ENCODE measurements at regions of chr5 and their contacts with region 1.

Region 1: GRCh38 chr5:132419502-132420468 is 50.3 kb downstream of the SLC22A5 start:
- DNase-seq: peak; percentile 72
- ATAC-seq: peak; percentile 85
- H3K4me3 ChIP-seq: no peak overlapping the region
- H3K27ac ChIP-seq: peak overlapping the region; percentile 31; the same call in 1 of the 2 replicates
- H3K4me1 ChIP-seq: peaks cover 26% of the 10 kb centered on the region
- H3K27me3 ChIP-seq: no peaks in the 10 kb centered on the region
- CTCF ChIP-seq: peak; percentile 90
- POLR2A ChIP-seq: 0 out of 2 replicates have a peak, but pooled peaks have one; percentile 30
- RAD21 ChIP-seq: peak; percentile 91

Region 2: DNA sequence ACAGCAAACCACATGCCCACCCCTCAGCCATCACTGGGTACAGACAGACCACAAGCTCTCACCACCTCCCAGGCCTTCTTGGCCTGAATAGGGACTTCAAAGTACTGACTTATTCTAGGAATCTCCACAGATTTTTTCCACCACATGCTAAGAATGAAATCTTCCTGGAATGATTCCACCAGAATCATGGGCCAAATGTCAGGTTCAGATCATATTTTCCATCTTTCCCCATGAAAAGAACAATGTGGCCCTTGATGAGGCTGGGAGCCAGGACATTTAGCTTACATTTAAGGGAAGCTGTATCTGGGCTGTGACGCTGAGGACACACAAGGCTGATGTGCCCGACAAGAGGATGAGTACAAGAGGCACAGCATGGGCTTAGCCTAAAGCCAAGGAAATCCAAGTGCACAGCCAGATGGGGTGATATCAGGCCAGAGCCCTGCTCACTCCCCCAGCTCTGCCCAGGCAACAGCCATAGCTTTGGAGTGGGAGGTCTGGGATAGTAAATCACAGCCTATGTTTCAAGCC is 436.5 kb before region 1 on chr5:
- CTCF ChIA-PET with region 1: no interaction called
- POLR2A ChIA-PET with region 1: no interaction called
- dilution Hi-C with region 1: no loop called
- in situ Hi-C with region 1: no loop called
- intact Hi-C with region 1: no loop called
- DNase-seq: no peak
- ATAC-seq: no peak
- H3K4me3 ChIP-seq: no peak overlapping the region
- H3K27ac ChIP-seq: no peak overlapping the region
- H3K4me1 ChIP-seq: no peaks in the 10 kb centered on the region
- H3K27me3 ChIP-seq: peaks cover 20% of the 10 kb centered on the region
- CTCF ChIP-seq: no peak
- POLR2A ChIP-seq: no peak
- RAD21 ChIP-seq: no peak

Region 3: DNA sequence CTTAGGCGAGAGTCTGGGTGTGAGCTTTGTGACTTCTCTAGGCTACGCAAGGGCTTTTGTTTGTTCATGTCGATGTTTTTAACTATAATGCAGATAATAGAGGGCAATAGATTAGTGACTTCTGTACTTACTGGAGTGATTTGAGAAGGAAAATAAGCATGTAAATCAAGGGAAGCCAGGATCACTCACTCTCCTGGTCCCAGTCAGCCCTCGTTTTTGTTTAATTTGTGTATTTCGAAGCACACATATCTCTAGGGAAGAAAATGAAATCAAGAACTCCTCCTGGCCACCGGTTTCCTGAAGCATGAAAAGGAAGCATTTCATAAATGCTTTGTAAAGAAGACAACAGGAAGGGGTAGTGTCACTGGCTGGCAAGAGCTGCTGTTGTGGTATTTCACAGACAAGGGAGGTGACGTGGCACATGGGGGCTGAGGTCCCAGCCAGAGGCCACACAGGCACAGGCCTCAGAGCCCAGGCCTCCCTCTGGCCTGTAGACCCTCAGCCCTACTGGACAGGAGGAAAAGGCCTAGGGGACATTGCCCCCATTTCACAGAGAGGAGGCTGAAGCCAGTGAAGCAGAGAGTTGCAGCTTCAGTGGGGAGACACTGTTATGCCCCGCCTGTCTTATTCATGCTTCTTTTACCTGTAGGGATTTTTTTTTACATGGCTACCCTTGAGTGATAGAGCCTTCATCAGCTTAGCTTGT is 36.7 kb after region 1 on chr5:
- CTCF ChIA-PET with region 1: no interaction called
- POLR2A ChIA-PET with region 1: no interaction called
- dilution Hi-C with region 1: no loop called
- in situ Hi-C with region 1: no loop called
- intact Hi-C with region 1: loop called (anchors 5 kb)
- DNase-seq: no peak
- ATAC-seq: no peak
- H3K4me3 ChIP-seq: no peak overlapping the region
- H3K27ac ChIP-seq: peak overlapping the region; percentile 57
- H3K4me1 ChIP-seq: peaks cover 32% of the 10 kb centered on the region
- H3K27me3 ChIP-seq: no peaks in the 10 kb centered on the region
- CTCF ChIP-seq: no peak
- POLR2A ChIP-seq: no peak
- RAD21 ChIP-seq: no peak

Region 4: GRCh38 chr5:132473019-132473531 is 53.3 kb after region 1 on chr5:
- CTCF ChIA-PET with region 1: no interaction called
- POLR2A ChIA-PET with region 1: no interaction called
- dilution Hi-C with region 1: no loop called
- in situ Hi-C with region 1: loop called (anchors 5 kb)
- intact Hi-C with region 1: no loop called
- DNase-seq: no peak
- ATAC-seq: no peak
- H3K4me3 ChIP-seq: no peak overlapping the region
- H3K27ac ChIP-seq: no peak overlapping the region
- H3K4me1 ChIP-seq: peaks cover 9% of the 10 kb centered on the region
- H3K27me3 ChIP-seq: no peaks in the 10 kb centered on the region
- CTCF ChIP-seq: no peak
- POLR2A ChIP-seq: no peak
- RAD21 ChIP-seq: no peak

Region 5: DNA sequence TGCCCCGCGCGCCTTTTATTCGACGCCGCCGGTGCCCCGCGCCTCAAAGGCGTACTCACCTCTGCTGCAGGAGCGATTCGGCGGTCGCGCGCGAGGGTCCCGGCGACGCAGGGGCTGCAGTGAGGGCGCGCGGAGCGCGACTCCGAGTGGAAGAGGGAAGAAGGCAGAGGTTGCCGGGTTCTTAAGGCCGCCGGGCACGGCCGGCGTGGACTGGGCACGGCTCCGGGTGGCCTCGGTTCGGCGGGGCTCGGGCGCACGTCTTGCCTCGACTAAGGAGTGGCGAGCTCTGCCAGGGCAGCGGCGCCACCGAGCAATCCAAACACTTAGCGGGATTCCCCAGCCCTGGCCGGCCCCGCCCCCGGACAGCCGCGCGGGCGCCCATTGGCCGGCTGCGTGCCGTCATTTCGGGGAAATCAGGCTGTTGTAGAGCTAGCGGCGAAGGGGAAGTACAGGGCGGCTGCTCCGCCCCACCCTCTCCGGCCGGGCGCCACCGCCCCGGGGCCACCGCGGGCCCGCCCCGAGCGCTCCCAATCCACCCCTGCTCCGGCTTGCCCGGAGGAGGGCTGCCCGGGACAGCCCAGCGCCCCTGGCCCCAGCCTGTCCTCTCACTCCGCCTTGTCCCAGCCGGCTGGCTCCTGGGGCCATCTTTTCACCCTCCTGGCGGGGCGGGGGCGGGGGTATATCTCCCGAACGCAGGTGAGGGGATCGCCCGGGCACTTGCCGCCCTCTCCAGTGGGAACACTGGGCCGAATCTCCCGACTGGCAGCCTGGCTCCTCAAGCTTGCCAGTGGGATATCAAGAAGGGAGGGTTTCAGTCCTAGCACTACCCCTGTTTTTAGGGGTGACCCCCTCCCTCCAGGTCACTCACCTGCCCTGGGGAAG is 70.9 kb after region 1 on chr5 and contains the start of gene IRF1:
- CTCF ChIA-PET with region 1: interaction called, 6 read pairs
- POLR2A ChIA-PET with region 1: interaction called, 3 read pairs
- dilution Hi-C with region 1: no loop called
- in situ Hi-C with region 1: no loop called
- intact Hi-C with region 1: loop called (anchors 1 kb)
- DNase-seq: peak; percentile 94
- ATAC-seq: peak; percentile 89
- H3K4me3 ChIP-seq: peak within 1 kb of the TSS; percentile 91
- H3K27ac ChIP-seq: peak within 1 kb of the TSS; percentile 85
- H3K4me1 ChIP-seq: peaks cover 28% of the 10 kb centered on the region
- H3K27me3 ChIP-seq: no peaks in the 10 kb centered on the region
- CTCF ChIP-seq: no peak
- POLR2A ChIP-seq: peak; percentile 99
- RAD21 ChIP-seq: no peak
- total RNA-seq, gene IRF1: 6.9 and 11.1 TPM in 2 replicates

Region 6: DNA sequence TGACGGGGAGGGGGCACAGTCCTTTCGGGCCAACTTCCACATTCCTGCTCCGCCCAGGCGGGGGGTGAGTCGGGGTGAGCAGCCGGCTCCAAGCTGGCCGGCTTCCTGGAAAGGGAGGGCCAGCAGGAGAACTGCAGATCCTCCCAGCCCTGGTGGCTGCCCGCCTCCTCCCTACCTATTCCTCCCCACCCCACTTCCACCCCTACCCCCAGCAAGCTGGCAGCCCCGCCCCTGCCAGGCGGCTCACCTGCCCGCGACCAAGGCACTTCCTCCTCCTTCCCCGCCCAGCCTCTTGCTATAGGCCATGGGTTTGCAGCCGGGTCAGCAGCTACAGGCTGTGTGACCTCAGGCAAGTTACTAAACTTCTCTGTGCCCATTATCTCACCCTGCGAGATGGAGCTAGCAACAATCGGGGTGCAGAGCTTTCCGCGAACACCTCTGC is 76.4 kb after region 1 on chr5:
- CTCF ChIA-PET with region 1: interaction called, 6 read pairs
- POLR2A ChIA-PET with region 1: interaction called, 3 read pairs
- dilution Hi-C with region 1: no loop called
- in situ Hi-C with region 1: no loop called
- intact Hi-C with region 1: loop called (anchors 1 kb)
- DNase-seq: peak; percentile 79
- ATAC-seq: peak; percentile 62
- H3K4me3 ChIP-seq: peak overlapping the region; percentile 59
- H3K27ac ChIP-seq: peak overlapping the region; percentile 96
- H3K4me1 ChIP-seq: peaks cover 27% of the 10 kb centered on the region
- H3K27me3 ChIP-seq: no peaks in the 10 kb centered on the region
- CTCF ChIP-seq: no peak
- POLR2A ChIP-seq: no peak
- RAD21 ChIP-seq: no peak

Measured in IMR-90 (cell line).